AG04449 (cell line): ENCODE measurements at regions of chr1 and their contacts with region 1.

Region 1: DNA sequence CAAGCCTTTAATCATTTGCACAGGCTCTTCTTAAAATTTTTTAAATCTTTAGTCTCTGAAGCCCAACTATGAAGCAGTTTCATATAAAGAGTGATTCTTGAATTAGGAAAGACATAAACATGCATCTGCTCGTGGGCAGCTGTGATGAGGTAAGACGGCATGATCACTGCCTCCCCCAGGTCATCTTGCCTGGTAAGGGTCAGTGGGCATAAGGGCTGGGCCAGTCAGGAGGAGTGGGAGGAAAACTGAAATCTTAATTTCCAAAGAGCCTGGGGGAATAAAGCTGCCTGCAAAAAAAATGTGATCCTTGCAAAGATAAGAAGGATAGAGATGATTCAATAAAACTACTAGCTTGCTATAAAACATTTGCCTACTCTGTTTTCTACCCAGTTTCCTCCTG is 197.7 kb downstream of the LMX1A start:
- DNase-seq: no peak
- H3K4me3 ChIP-seq: no peak overlapping the region
- CTCF ChIP-seq: no peak

Region 2: DNA sequence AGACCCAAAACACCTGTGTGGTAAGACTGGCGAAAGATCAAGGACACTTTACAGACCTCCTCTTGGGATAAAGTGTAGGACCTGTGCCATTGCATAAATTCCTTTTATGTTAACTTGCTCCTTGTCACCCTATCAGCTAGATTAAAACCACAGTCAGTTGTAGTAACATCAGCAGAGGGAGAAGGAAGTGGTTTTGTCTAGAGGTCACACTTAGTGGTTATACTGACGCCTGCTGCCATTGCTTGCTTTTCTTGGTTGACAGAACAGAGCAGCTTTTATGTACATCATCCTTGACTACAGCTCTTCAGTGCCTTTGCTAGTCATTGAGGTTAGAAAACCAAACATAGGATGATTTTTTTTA is 498.4 kb before region 1 on chr1:
- CTCF ChIA-PET with region 1: no interaction called
- POLR2A ChIA-PET with region 1: no interaction called
- DNase-seq: no peak
- H3K4me3 ChIP-seq: no peak overlapping the region
- CTCF ChIP-seq: no peak

Region 3: GRCh38 chr1:164969253-164969652 is 189.5 kb before region 1 on chr1:
- CTCF ChIA-PET with region 1: no interaction called
- POLR2A ChIA-PET with region 1: no interaction called
- DNase-seq: no peak
- H3K4me3 ChIP-seq: no peak overlapping the region
- CTCF ChIP-seq: no peak

Region 4: DNA sequence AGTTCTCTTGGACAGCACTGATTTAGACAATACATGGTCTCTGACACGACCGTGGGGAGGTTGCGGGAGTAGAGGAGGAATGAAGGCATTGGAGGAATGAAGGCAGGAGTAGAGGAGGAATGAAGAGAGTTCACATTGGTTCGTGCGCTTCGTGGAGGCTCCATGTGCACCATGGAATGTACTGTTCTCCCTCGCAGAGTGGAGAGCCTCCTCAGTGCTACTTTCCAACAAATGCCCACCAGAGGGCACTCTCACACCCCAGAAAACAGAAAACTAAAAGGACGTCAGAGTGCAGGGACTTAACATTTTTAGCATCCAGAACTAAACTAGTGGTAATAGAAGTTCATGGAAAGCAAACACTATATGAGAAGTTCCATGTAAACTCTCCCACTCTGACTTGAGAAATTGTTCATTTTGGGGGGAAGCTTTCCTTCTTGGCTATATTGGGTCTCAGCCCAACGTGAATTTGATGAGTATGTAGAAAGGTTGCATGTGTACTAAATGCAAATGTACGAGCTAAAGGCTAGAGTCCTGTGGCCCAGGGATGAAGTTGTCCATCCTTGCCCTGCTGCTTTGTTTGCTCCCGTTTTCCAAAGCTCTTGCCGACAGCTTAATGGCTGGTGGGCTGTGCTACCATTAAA is 13.9 kb before region 1 on chr1:
- CTCF ChIA-PET with region 1: interaction called, 12 read pairs
- POLR2A ChIA-PET with region 1: no interaction called
- DNase-seq: peak; percentile 12
- H3K4me3 ChIP-seq: no peak overlapping the region
- CTCF ChIP-seq: peak; percentile 69